ENCODE measurements at regions of chr9 and their contacts with region 1.

Region 1: GRCh38 chr9:2193552-2193951 is 178.4 kb downstream of the SMARCA2 start:
- DNase-seq: no peak

Region 2: GRCh38 chr9:2158111-2158610 is 35.4 kb before region 1 on chr9:
- intact Hi-C with region 1: loop called in 1 of 2 experiments (anchors 5 kb)
- DNase-seq: no peak

Measured in posterior vena cava (tissue), 2 donors.